ENCODE measurements at regions of chr1 and their contacts with region 1.

Region 1: GRCh38 chr1:87953732-87954344 is 625.2 kb downstream of the LMO4 start:
- DNase-seq: peak in 34 of 35 experiments; percentile 6 to 68 (median 28)
- ATAC-seq: peak in 3 of 4 experiments; percentile 59 to 65 (median 60)
- H3K4me3 ChIP-seq: no peak overlapping the region
- H3K4me3 Mint-ChIP-seq: no peak overlapping the region
- H3K27ac ChIP-seq: no peak overlapping the region
- H3K27ac Mint-ChIP-seq: no peak overlapping the region
- H3K4me1 ChIP-seq: no peaks in the 10 kb centered on the region
- H3K4me1 Mint-ChIP-seq: no peaks in the 10 kb centered on the region
- H3K27me3 ChIP-seq: no peaks in the 10 kb centered on the region
- H3K27me3 Mint-ChIP-seq: peaks cover 12 to 20% of the 10 kb centered on the region in 2 donors

Region 2: DNA sequence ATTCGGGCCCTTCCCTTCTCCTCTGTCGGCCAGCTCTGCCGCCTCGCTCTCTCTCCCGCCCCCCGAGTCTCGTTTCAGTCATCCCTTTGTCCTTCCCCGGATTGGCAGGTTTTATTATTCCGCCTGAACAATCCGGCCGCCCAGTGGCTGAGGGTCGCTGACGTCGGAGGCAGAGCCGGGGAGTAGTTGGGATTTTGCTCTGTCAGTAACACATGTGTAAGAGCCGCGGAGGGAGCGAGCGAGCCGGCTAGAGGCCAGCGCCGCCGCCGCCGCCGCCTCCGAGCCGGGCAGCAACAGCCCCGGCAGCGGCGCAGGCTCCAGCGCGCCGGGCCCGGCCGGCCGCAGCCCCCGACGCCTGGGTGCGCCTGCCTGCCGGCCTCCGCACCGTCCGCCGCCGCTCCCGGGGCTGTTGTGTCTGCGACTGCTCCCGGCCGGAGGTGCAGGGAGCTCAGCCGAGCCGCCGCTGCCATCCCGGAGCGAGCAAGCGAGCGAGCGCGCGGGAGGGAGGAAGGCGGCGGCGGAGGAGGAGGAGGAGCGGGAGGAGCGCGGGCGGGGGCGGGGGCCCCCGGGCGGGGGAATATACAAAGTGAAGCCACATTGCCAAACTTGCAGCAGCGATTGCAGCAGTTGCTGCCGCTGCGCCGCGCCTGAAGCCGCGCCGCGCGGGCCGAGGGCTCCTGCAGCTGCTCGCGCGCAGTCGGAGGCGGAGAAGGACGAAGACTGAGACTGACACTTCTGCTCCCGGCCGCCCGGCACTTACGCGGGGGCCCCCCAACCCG is 625.4 kb before region 1 on chr1 and contains the start of gene LMO4:
- CTCF ChIA-PET with region 1: interaction called, 13 to 21 read pairs
- POLR2A ChIA-PET with region 1: no interaction called
- DNase-seq: peak; percentile 54 to 90 (median 74)
- ATAC-seq: peak; percentile 63 to 77 (median 68)
- H3K4me3 ChIP-seq: peak within 1 kb of the TSS; percentile 76 to 78
- H3K4me3 Mint-ChIP-seq: peak within 1 kb of the TSS; percentile 93 to 97 (median 95)
- H3K27ac ChIP-seq: peak within 1 kb of the TSS; percentile 72
- H3K27ac Mint-ChIP-seq: peak within 1 kb of the TSS; percentile 92 to 96
- H3K4me1 ChIP-seq: peaks cover 24 to 27% of the 10 kb centered on the region in 2 experiments
- H3K4me1 Mint-ChIP-seq: peaks cover 43 to 49% (median 48%) of the 10 kb centered on the region in 3 donors
- H3K27me3 ChIP-seq: peaks cover 0 to 23% of the 10 kb centered on the region in 2 experiments
- H3K27me3 Mint-ChIP-seq: peaks cover 0 to 2% of the 10 kb centered on the region in 2 donors
- total RNA-seq, gene LMO4: 14.4 to 26.2 (median 20.2) TPM

Region 3: DNA sequence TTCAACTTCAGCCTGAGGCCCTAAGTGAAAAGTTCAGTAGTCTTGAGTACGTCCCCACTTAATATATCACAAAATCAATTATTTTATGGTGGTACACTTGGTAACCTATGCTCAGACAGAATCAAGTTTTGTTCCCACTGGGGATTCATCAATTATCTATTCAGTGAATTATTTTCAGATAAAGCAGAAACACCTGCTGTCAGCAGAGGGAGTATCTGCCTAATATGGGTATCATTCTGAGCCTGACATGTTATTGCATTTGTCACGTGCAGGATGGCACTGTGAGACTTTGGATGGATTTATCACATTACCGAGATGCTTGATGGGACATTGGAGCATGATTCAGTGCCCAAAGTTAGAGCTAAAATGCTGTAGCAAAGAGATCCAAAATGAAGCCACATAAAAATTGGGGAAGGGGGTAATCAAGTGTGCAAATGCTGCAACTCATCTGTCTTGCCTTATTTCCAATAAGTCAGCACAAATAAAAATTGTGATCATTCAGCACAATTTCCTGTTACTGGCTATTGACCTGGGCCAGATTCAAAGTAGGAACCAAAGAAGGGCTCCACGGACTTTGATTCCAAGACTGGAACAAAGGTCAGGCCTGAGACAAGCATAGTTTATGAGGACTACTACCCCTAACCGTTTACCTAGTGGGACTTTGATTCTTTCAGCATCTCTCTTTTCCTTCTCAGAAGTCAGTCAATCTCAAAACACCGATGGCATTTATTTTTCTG is 32.5 kb after region 1 on chr1:
- CTCF ChIA-PET with region 1: no interaction called
- POLR2A ChIA-PET with region 1: no interaction called
- DNase-seq: no peak
- ATAC-seq: no peak
- H3K4me3 ChIP-seq: no peak overlapping the region
- H3K4me3 Mint-ChIP-seq: no peak overlapping the region
- H3K27ac ChIP-seq: no peak overlapping the region
- H3K27ac Mint-ChIP-seq: no peak overlapping the region
- H3K4me1 ChIP-seq: no peaks in the 10 kb centered on the region
- H3K4me1 Mint-ChIP-seq: no peaks in the 10 kb centered on the region
- H3K27me3 ChIP-seq: no peaks in the 10 kb centered on the region
- H3K27me3 Mint-ChIP-seq: peaks cover 6 to 13% of the 10 kb centered on the region in 2 donors

Measured in T-cell (primary cell).